H1 (cell line): ENCODE measurements at regions of chr1 and their contacts with region 1.

Region 1: GRCh38 chr1:18883636-18884418 is 18.5 kb downstream of the ALDH4A1 start:
- DNase-seq: peak; percentile 60 to 97
- H3K4me3 ChIP-seq: no peak overlapping the region
- H3K27ac ChIP-seq: no peak overlapping the region
- H3K4me1 ChIP-seq: peaks cover 0 to 6% (median 4%) of the 10 kb centered on the region in 4 experiments; a peak in 4 of 7 replicates
- H3K27me3 ChIP-seq: no peaks in the 10 kb centered on the region
- CTCF ChIP-seq: peak; percentile 84 to 97 (median 93)
- EP300 ChIP-seq: no peak
- POLR2A ChIP-seq: no peak
- RAD21 ChIP-seq: peak; percentile 86 to 92

Region 2: GRCh38 chr1:18861082-18861481 is 22.7 kb before region 1 on chr1:
- CTCF ChIA-PET with region 1: interaction called, 12 read pairs
- POLR2A ChIA-PET with region 1: no interaction called
- DNase-seq: no peak
- H3K4me3 ChIP-seq: no peak overlapping the region
- H3K27ac ChIP-seq: no peak overlapping the region
- H3K4me1 ChIP-seq: no peaks in the 10 kb centered on the region
- H3K27me3 ChIP-seq: peaks cover 0 to 4% (median 0%) of the 10 kb centered on the region in 4 experiments; a peak in 2 of 7 replicates
- CTCF ChIP-seq: no peak
- EP300 ChIP-seq: no peak
- POLR2A ChIP-seq: no peak
- RAD21 ChIP-seq: no peak

Region 3: DNA sequence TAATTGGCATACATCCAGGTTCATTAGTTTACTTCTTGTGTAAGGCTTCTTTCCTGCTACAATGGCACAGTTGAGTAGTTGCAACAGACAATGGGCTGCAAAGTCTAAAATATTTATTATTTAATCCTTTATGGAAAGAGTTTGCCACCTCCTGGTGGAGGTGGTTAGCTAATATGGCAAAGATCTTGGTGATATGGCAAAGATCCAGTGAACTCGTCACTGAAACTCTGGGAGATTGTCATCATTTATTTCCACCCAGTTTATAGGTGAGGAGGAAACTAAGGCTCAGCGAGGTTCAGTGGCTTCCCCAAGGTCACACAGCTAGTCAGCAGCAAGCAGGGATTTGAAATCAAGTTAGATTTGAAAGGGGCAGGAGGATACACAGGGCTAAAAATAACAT is 88.7 kb after region 1 on chr1:
- CTCF ChIA-PET with region 1: interaction called, 13 read pairs
- POLR2A ChIA-PET with region 1: no interaction called
- DNase-seq: no peak
- H3K4me3 ChIP-seq: no peak overlapping the region
- H3K27ac ChIP-seq: no peak overlapping the region
- H3K4me1 ChIP-seq: no peaks in the 10 kb centered on the region
- H3K27me3 ChIP-seq: no peaks in the 10 kb centered on the region
- CTCF ChIP-seq: 0 out of 4 replicates have a peak, but pooled peaks of 1 of the 3 experiments have one; percentile 21
- EP300 ChIP-seq: no peak
- POLR2A ChIP-seq: no peak
- RAD21 ChIP-seq: peak in 1 of 2 experiments; percentile 22; a peak in 2 of 4 replicates

Region 4: DNA sequence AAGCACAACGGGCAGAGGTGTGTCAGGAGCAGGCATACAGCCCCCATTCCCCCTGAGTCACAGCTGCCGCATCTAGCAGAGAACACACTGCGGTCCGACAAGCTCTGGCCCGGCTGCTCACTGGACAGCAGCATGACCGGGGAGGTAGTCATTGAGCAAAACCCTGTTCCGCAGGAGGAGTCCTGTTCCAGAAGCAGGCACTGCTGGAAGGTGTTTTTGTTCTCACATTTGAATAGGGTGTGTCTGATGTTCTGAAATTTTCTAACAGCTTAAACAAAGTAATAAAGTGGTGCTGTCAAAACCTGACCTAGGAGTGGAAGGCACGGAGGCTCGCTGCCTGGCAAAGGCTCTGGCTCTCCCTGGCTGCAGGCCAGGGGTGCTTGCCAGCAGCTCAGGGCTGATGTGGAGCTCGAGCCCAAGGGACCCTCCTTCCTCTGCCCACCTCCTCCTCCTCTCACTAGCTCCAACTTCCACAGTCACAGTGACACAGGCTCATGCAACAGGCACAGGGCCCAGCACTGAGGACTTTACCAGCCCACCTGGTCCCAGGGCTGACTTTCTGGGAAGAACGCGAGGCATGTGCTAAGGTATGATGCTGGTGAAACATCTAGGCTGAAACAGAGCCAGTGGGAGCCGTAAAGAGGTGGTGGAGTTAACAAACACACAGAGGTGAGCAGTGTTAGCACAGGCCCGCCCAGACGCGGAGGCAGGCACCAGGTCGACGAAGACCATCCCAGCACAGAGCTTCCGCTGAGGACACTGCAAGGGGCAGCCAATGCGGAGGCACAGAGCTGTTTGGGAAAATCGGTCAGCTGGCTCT is 191.3 kb after region 1 on chr1:
- CTCF ChIA-PET with region 1: interaction called, 12 read pairs
- POLR2A ChIA-PET with region 1: no interaction called
- DNase-seq: no peak
- H3K4me3 ChIP-seq: no peak overlapping the region
- H3K27ac ChIP-seq: no peak overlapping the region
- H3K4me1 ChIP-seq: peaks cover 0 to 6% (median 2%) of the 10 kb centered on the region in 4 experiments; a peak in 4 of 7 replicates
- H3K27me3 ChIP-seq: no peaks in the 10 kb centered on the region
- CTCF ChIP-seq: no peak
- EP300 ChIP-seq: no peak
- POLR2A ChIP-seq: no peak
- RAD21 ChIP-seq: no peak